ENCODE measurements at regions of chr17 and their contacts with region 1.

Region 1: GRCh38 chr17:41801374-41802271 is 10.1 kb downstream of the P3H4 start:
- DNase-seq: peak; percentile 86
- ATAC-seq: peak; percentile 96
- H3K4me3 Mint-ChIP-seq: no peak overlapping the region
- H3K27ac Mint-ChIP-seq: no peak overlapping the region
- H3K4me1 Mint-ChIP-seq: peaks cover 3% of the 10 kb centered on the region
- H3K27me3 Mint-ChIP-seq: no peaks in the 10 kb centered on the region
- CTCF ChIP-seq: peak; percentile 95

Region 2: GRCh38 chr17:41678907-41679739 is 122.5 kb before region 1 on chr17:
- CTCF ChIA-PET with region 1: no interaction called
- POLR2A ChIA-PET with region 1: no interaction called
- intact Hi-C with region 1: no loop called
- DNase-seq: peak; percentile 87
- ATAC-seq: peak; percentile 88
- H3K4me3 Mint-ChIP-seq: peak overlapping the region; percentile 88
- H3K27ac Mint-ChIP-seq: peak overlapping the region; percentile 97
- H3K4me1 Mint-ChIP-seq: peaks cover 48% of the 10 kb centered on the region
- H3K27me3 Mint-ChIP-seq: no peaks in the 10 kb centered on the region
- CTCF ChIP-seq: no peak

Region 3: GRCh38 chr17:41717408-41718286 is 84.0 kb before region 1 on chr17:
- CTCF ChIA-PET with region 1: interaction called, 12 read pairs
- POLR2A ChIA-PET with region 1: no interaction called
- intact Hi-C with region 1: no loop called
- DNase-seq: peak; percentile 33
- ATAC-seq: peak; percentile 84
- H3K4me3 Mint-ChIP-seq: no peak overlapping the region
- H3K27ac Mint-ChIP-seq: no peak overlapping the region
- H3K4me1 Mint-ChIP-seq: peaks cover 8% of the 10 kb centered on the region
- H3K27me3 Mint-ChIP-seq: peaks cover 5% of the 10 kb centered on the region
- CTCF ChIP-seq: no peak

Region 4: GRCh38 chr17:41730479-41730878 is 71.1 kb before region 1 on chr17:
- CTCF ChIA-PET with region 1: interaction called, 48 read pairs
- POLR2A ChIA-PET with region 1: interaction called, 3 read pairs
- intact Hi-C with region 1: no loop called
- DNase-seq: no peak
- ATAC-seq: no peak
- H3K4me3 Mint-ChIP-seq: no peak overlapping the region
- H3K27ac Mint-ChIP-seq: no peak overlapping the region
- H3K4me1 Mint-ChIP-seq: peaks cover 8% of the 10 kb centered on the region
- H3K27me3 Mint-ChIP-seq: peaks cover 25% of the 10 kb centered on the region
- CTCF ChIP-seq: no peak

Region 5: DNA sequence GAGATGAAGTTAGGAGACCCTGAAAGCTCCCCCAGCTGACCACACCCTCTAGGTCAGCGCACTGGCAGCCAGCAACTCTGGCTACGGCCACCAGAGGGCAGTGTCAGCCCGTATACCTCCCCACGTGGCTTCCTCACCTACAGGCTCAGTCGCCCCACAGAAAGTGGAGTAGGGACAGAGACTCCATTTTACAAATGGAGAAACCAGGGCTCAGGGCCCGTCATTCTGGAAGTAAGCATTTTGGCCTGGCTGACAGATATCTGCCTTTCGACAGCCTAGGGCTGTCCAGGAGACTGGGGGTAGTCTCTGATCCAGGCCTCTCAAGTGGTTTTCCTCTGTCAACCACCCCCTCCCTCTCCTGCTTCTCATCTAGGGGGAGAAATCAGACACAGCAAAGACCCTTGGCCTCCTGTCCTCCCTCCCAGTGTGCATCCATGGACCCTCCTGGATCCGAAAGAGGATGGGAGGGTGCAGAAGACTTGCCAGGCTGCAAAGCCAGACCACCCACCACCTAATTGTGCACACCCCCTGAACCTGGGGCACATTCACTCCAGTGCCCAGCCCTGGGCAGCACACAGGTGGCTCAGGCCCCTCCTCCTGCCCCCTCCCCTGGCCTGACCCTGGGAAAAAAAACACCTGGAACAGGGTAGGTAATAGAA is 63.4 kb before region 1 on chr17:
- CTCF ChIA-PET with region 1: interaction called, 48 read pairs
- POLR2A ChIA-PET with region 1: interaction called, 4 read pairs
- intact Hi-C with region 1: loop called (anchors 2 kb)
- DNase-seq: peak; percentile 90
- ATAC-seq: peak; percentile 95
- H3K4me3 Mint-ChIP-seq: no peak overlapping the region
- H3K27ac Mint-ChIP-seq: peak overlapping the region; percentile 38
- H3K4me1 Mint-ChIP-seq: peaks cover 10% of the 10 kb centered on the region
- H3K27me3 Mint-ChIP-seq: peaks cover 32% of the 10 kb centered on the region
- CTCF ChIP-seq: peak; percentile 94

Region 6: DNA sequence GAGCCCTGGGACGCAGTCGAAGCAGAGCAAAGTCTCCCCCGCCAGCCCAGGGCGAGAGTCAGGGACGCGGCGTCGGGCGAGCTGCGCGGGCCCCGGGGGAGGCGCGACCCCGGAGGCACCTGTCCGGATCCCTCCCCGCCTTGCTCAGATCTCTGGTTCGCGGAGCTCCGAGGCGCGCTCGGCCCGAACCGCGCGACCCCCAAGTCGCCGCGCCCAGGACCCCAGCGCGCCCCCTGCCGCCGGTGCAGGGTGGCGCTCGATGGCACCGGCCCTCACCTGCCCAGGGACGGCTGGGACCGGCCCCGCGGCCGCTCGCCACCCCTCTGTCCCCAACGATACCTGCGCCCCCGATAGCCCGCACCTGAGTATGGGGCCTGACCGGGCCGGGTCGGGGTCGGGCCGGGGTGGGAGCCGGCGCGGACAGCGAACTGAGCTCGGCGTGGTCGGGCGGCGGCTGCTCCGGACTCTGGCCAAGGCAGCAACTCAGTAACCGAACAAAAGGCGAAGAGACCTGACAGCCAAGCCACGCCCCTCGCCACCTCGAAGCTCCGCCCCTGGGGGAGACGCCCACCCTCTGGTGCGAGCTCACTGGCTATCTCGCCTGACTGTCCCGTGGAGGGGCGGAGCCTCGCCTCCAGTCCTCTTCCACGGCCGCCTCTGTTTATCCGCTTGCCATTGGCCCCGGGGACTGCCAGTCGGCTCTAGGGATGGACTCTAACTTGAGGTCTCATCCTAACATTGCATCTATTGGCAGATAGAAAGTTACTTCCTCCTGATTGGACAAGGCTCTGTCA is 15.2 kb before region 1 on chr17 and contains the start of gene JUP:
- CTCF ChIA-PET with region 1: interaction called, 97 read pairs
- POLR2A ChIA-PET with region 1: interaction called, 5 read pairs
- intact Hi-C with region 1: no loop called
- DNase-seq: peak; percentile 93
- ATAC-seq: peak; percentile 97
- H3K4me3 Mint-ChIP-seq: peak within 1 kb of the TSS; percentile 35
- H3K27ac Mint-ChIP-seq: no peak within 1 kb of the TSS
- H3K4me1 Mint-ChIP-seq: peaks cover 33% of the 10 kb centered on the region
- H3K27me3 Mint-ChIP-seq: peaks cover 29% of the 10 kb centered on the region
- CTCF ChIP-seq: peak; percentile 60
- total RNA-seq, gene JUP: 1.5 to 1.8 TPM

Region 7: DNA sequence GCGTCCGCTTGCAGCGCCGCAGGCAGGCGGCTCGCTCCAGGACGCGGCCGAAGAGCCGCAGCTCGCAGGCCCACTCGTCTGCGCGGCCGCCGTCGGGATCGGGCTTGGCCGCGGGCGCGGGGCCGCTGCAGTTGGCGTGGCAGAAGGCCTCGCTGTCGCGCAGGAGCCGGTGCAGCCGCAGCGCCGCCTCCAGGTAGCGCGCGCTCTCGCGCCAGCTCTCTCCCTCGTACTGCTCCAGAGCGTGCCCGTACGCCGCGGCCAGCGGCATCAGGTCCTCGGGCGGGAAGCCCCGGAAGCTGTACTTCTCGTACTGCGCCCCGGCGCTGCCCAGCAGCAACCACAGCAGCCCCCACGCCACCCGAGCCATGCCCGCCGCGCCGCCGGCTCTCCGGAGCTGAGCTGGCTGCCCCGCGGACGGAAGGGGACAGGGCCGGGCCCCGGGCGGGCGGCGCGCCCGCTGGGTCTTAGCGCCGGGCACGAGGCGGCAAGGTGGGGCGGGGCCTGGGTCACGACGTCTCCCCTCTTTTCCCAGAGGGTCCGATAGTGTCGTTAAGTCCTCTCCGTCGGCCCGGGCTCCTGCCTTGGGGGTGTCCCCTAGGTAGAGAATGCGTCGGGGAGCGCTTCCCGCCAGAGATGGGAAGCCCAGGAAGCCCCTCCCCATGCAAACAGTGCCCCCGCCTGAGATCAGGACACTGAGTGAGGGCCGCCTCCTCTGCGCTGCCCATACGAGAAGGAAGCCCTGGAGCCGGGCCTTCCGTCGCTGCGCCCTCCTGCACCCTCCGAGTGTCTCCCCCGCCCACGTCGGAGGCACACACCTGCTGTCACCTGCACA is 10.1 kb after region 1 on chr17 and contains the start of gene P3H4:
- CTCF ChIA-PET with region 1: interaction called, 35 read pairs
- POLR2A ChIA-PET with region 1: interaction called, 3 read pairs
- intact Hi-C with region 1: no loop called
- DNase-seq: peak; percentile 78
- ATAC-seq: peak; percentile 86
- H3K4me3 Mint-ChIP-seq: peak within 1 kb of the TSS; percentile 79
- H3K27ac Mint-ChIP-seq: peak within 1 kb of the TSS; percentile 63
- H3K4me1 Mint-ChIP-seq: peaks cover 21% of the 10 kb centered on the region
- H3K27me3 Mint-ChIP-seq: peaks cover 7% of the 10 kb centered on the region
- CTCF ChIP-seq: peak; percentile 67
- total RNA-seq, gene P3H4: 2.6 to 3.2 TPM

Measured in activated CD8-positive, alpha-beta T cell treated with anti-CD3 and anti-CD28 coated beads for 36 hours (primary cell).